CD8-positive, alpha-beta T cell (primary cell): ENCODE measurements at regions of chrX and their contacts with region 1.

Region 1: GRCh38 chrX:39309018-39309635 is 507.9 kb downstream of the MID1IP1 start:
- DNase-seq: peak in 5 of 9 experiments; percentile 13 to 74 (median 49)
- ATAC-seq: peak; percentile 79
- H3K4me3 ChIP-seq: no peak overlapping the region
- H3K4me3 Mint-ChIP-seq: no peak overlapping the region
- H3K27ac ChIP-seq: peak overlapping the region; percentile 58 to 80
- H3K27ac Mint-ChIP-seq: peak overlapping the region; percentile 98
- H3K4me1 ChIP-seq: peaks cover 46% of the 10 kb centered on the region
- H3K4me1 Mint-ChIP-seq: peaks cover 66% of the 10 kb centered on the region
- H3K27me3 ChIP-seq: no peaks in the 10 kb centered on the region
- H3K27me3 Mint-ChIP-seq: no peaks in the 10 kb centered on the region
- CTCF ChIP-seq: no peak

Region 2: DNA sequence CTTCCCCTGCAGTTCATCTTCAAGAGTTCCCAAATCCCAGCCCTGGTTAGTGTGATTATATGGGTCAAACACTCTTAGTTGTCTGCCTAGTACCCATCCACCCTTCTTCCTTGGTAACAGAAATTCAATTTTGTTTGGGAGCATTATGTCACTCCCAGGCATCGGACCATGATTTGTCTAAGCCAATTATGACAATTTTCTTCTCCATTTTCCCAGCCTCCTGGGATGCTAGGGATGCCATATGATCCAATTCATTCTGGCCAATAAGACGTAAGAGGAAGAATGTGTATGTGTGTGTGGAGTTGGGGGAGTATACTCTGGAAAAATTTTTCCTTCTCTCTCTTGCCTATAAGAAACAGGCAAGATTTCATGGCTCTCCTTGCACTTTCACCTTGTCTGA is 42.0 kb before region 1 on chrX:
- CTCF ChIA-PET with region 1: no interaction called
- POLR2A ChIA-PET with region 1: no interaction called
- intact Hi-C with region 1: loop called in 1 of 2 experiments (anchors 5 kb)
- DNase-seq: no peak
- ATAC-seq: no peak
- H3K4me3 ChIP-seq: no peak overlapping the region
- H3K4me3 Mint-ChIP-seq: no peak overlapping the region
- H3K27ac ChIP-seq: no peak overlapping the region
- H3K27ac Mint-ChIP-seq: no peak overlapping the region
- H3K4me1 ChIP-seq: no peaks in the 10 kb centered on the region
- H3K4me1 Mint-ChIP-seq: peaks cover 14% of the 10 kb centered on the region
- H3K27me3 ChIP-seq: no peaks in the 10 kb centered on the region
- H3K27me3 Mint-ChIP-seq: no peaks in the 10 kb centered on the region
- CTCF ChIP-seq: no peak

Region 3: DNA sequence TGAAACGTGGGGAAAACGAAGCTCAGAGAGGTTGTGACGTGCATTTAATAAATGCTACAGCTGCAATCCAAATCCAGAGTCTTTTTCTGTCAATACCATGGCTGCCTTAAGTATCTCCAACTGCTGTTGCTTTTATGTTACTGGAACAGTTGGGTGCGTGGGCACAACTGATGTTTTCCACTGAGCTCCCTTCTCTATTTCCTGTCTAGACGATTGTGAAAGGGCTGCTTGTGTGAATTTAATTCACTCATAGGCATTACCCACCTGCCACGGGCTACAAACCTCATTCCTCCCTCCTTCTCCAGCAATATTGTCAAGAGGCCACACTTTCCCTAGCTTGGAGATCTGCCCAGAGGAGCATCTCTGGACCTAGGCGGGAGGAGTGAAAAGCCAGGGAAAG is 18.1 kb after region 1 on chrX:
- CTCF ChIA-PET with region 1: interaction called, 3 read pairs
- POLR2A ChIA-PET with region 1: no interaction called
- intact Hi-C with region 1: loop called in 1 of 2 experiments (anchors 2 kb)
- DNase-seq: peak in 2 of 9 experiments; percentile 20
- ATAC-seq: peak; percentile 56
- H3K4me3 ChIP-seq: no peak overlapping the region
- H3K4me3 Mint-ChIP-seq: no peak overlapping the region
- H3K27ac ChIP-seq: no peak overlapping the region
- H3K27ac Mint-ChIP-seq: peak overlapping the region; percentile 82
- H3K4me1 ChIP-seq: peaks cover 12% of the 10 kb centered on the region
- H3K4me1 Mint-ChIP-seq: peaks cover 43% of the 10 kb centered on the region
- H3K27me3 ChIP-seq: no peaks in the 10 kb centered on the region
- H3K27me3 Mint-ChIP-seq: no peaks in the 10 kb centered on the region
- CTCF ChIP-seq: no peak

Region 4: GRCh38 chrX:39427906-39428305 is 118.8 kb after region 1 on chrX:
- CTCF ChIA-PET with region 1: no interaction called
- POLR2A ChIA-PET with region 1: no interaction called
- intact Hi-C with region 1: loop called in 1 of 2 experiments (anchors 10 kb)
- DNase-seq: no peak
- ATAC-seq: no peak
- H3K4me3 ChIP-seq: no peak overlapping the region
- H3K4me3 Mint-ChIP-seq: no peak overlapping the region
- H3K27ac ChIP-seq: no peak overlapping the region
- H3K27ac Mint-ChIP-seq: peak overlapping the region; percentile 81
- H3K4me1 ChIP-seq: peaks cover 14% of the 10 kb centered on the region
- H3K4me1 Mint-ChIP-seq: peaks cover 26% of the 10 kb centered on the region
- H3K27me3 ChIP-seq: no peaks in the 10 kb centered on the region
- H3K27me3 Mint-ChIP-seq: no peaks in the 10 kb centered on the region
- CTCF ChIP-seq: no peak